ENCODE measurements at regions of chr1 and their contacts with region 1.

Region 1: GRCh38 chr1:85884372-85885035 is 176.3 kb upstream of the ZNHIT6 start:
- DNase-seq: no peak
- H3K4me3 ChIP-seq: no peak overlapping the region
- H3K27ac ChIP-seq: no peak overlapping the region
- H3K4me1 ChIP-seq: no peaks in the 10 kb centered on the region
- H3K27me3 ChIP-seq: no peaks in the 10 kb centered on the region
- CTCF ChIP-seq: peak; percentile 25 to 59 (median 57)

Region 2: DNA sequence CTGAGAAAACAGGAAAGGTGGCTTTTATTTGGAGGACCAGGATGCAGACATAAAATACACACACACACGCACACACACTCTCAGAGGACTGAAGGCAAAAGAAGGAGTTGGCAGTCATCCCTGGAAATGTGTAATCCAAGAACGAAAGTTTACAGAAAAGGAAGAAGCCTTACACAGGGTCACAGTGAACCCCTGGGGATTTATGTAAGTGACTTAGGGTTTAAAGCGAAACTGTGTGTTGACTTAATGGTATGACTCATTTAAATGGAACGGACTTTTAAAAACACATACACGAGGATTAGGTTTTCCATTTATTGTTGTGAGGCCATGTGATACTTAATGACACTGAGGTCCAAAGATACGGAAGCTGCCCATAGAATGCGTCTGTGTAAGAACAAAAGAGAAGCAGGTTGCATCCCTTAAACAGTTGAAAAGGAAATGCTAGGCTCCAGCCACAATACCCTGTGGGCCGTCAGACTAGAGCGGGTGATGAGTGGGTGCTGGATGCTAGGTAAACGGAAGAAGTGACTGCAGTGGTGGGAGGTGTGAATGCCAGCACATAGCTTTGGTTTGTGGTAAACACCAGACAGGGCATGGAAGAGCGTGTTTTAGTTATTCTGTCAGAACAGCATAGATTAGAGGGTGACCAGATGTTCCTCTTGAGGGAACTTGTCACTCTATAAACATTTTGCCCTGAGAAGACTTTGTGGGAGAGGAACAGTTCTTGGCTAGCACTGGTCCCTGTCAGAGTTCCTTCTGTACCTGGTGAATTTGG is 586.5 kb before region 1 on chr1:
- intact Hi-C with region 1: loop called (anchors 5 kb)
- DNase-seq: peak in 1 of 2 donors; percentile 85
- H3K4me3 ChIP-seq: peak overlapping the region in 1 of 2 donors; percentile 8
- H3K27ac ChIP-seq: peak overlapping the region; percentile 81 to 83
- H3K4me1 ChIP-seq: peaks cover 10 to 26% of the 10 kb centered on the region in 2 donors
- H3K27me3 ChIP-seq: no peaks in the 10 kb centered on the region
- CTCF ChIP-seq: no peak

Region 3: GRCh38 chr1:85612704-85613361 is 271.7 kb before region 1 on chr1:
- intact Hi-C with region 1: loop called (anchors 10 kb)
- DNase-seq: no peak
- H3K4me3 ChIP-seq: peak overlapping the region in 1 of 2 donors; percentile 28
- H3K27ac ChIP-seq: peak overlapping the region; percentile 76 to 77
- H3K4me1 ChIP-seq: peaks cover 3 to 21% of the 10 kb centered on the region in 2 donors
- H3K27me3 ChIP-seq: no peaks in the 10 kb centered on the region
- CTCF ChIP-seq: peak; percentile 31 to 61 (median 60)

Region 4: GRCh38 chr1:85707990-85708828 is 176.3 kb before region 1 on chr1 and contains the start of gene ZNHIT6:
- intact Hi-C with region 1: loop called (anchors 5 kb)
- DNase-seq: peak; percentile 54 to 94
- H3K4me3 ChIP-seq: peak within 1 kb of the TSS; percentile 77 to 87
- H3K27ac ChIP-seq: peak within 1 kb of the TSS; percentile 85 to 86
- H3K4me1 ChIP-seq: peaks cover 0 to 2% of the 10 kb centered on the region in 2 donors
- H3K27me3 ChIP-seq: no peaks in the 10 kb centered on the region
- CTCF ChIP-seq: peak in 2 of 3 experiments; percentile 17 to 32
- total RNA-seq, gene ZNHIT6: 8.2 TPM

Region 5: DNA sequence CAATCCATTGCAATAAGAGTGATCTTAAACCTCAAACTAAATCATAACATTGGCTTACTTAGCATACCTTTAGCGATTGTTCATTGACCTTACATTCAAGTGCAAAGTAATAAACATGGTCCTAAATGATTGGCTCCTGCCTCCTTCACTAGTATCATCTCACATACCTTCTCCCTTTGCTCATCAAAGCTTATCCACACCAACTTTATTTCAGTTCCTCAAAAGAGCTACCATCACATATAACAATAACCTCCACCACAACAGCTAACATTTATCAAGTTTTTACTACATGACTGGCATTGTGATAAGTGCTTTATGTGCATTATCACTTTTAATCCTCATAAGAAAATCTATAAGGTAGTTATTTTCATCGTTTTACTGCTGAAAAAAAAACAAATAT is 73.3 kb after region 1 on chr1:
- intact Hi-C with region 1: no loop called
- DNase-seq: no peak
- H3K4me3 ChIP-seq: no peak overlapping the region
- H3K27ac ChIP-seq: no peak overlapping the region
- H3K4me1 ChIP-seq: no peaks in the 10 kb centered on the region
- H3K27me3 ChIP-seq: no peaks in the 10 kb centered on the region
- CTCF ChIP-seq: no peak